ENCODE measurements at regions of chr2 and their contacts with region 1.

Region 1: DNA sequence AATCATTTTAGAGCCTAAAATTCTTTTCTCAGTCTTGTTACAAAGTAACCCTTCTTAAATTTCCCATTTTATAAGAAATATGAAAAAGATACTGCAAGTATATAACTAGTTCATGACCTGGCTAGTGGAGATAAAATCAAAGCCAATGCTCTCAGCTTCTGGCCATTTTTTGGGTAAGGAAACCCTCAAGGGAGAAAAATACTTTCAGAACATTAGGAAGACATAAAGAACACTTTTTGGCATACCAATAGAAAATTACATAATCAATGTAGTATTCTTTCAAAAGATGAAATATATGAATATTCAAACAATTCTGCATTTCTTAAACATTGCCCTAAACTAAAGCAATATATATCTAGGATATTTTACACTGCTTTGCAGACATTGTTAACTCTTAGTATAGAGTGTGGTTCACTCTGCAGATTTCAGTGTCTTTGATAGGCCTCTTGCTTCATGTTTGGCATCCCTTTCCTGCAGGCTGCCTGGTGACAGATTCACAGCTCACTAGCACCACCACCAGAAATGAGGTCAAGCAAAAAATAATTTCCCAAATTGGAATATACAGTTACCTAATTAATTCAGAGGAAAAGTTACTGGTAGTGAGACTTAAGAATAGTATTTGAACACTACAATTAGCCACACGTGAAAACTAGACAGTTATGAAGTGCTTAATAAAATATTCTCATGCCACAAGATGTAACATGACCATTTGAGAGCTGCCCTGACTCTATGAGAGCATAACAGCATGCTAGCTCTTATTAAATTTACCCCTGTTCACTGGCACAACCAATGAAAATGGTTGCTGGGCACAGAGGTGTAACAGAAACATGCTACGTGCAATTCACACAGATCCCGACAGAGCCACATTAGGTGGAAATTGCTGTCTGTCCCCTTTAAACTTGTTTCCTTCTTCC is 36.0 kb downstream of the PAIP2B start:
- DNase-seq: peak; percentile 32
- H3K4me3 ChIP-seq: no peak overlapping the region
- H3K27ac ChIP-seq: no peak overlapping the region
- H3K4me1 ChIP-seq: no peaks in the 10 kb centered on the region
- H3K27me3 ChIP-seq: no peaks in the 10 kb centered on the region
- CTCF ChIP-seq: peak; percentile 48

Region 2: GRCh38 chr2:71049365-71050360 is 141.2 kb before region 1 on chr2:
- CTCF ChIA-PET with region 1: no interaction called
- POLR2A ChIA-PET with region 1: no interaction called
- intact Hi-C with region 1: no loop called
- DNase-seq: no peak
- H3K4me3 ChIP-seq: no peak overlapping the region
- H3K27ac ChIP-seq: no peak overlapping the region
- H3K4me1 ChIP-seq: no peaks in the 10 kb centered on the region
- H3K27me3 ChIP-seq: no peaks in the 10 kb centered on the region
- CTCF ChIP-seq: no peak

Region 3: GRCh38 chr2:71082402-71083252 is 108.3 kb before region 1 on chr2:
- CTCF ChIA-PET with region 1: no interaction called
- POLR2A ChIA-PET with region 1: no interaction called
- intact Hi-C with region 1: no loop called
- DNase-seq: no peak
- H3K4me3 ChIP-seq: no peak overlapping the region
- H3K27ac ChIP-seq: no peak overlapping the region
- H3K4me1 ChIP-seq: no peaks in the 10 kb centered on the region
- H3K27me3 ChIP-seq: no peaks in the 10 kb centered on the region
- CTCF ChIP-seq: no peak

Region 4: DNA sequence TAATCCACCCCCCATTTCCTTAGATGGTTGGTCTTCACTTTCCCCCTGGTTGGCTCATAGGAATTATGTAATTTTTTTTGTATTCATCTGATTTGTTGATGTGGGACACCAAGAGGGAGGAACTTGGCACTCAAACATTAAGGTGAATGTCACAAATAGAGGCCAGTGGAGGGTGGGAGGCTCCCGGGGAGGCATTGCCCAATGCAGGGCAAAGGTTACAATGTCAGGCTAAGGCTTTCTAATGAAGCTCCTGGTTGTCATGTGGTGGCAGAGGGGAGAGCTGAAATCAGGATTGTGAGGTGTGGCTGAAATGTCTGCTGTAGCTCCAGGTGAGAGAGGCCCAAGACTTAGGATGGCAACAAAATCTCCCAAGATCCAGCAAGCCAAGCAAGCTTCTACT is 17.8 kb before region 1 on chr2:
- CTCF ChIA-PET with region 1: no interaction called
- POLR2A ChIA-PET with region 1: interaction called, 11 read pairs
- intact Hi-C with region 1: no loop called
- DNase-seq: no peak
- H3K4me3 ChIP-seq: no peak overlapping the region
- H3K27ac ChIP-seq: no peak overlapping the region
- H3K4me1 ChIP-seq: no peaks in the 10 kb centered on the region
- H3K27me3 ChIP-seq: no peaks in the 10 kb centered on the region
- CTCF ChIP-seq: no peak

Region 5: DNA sequence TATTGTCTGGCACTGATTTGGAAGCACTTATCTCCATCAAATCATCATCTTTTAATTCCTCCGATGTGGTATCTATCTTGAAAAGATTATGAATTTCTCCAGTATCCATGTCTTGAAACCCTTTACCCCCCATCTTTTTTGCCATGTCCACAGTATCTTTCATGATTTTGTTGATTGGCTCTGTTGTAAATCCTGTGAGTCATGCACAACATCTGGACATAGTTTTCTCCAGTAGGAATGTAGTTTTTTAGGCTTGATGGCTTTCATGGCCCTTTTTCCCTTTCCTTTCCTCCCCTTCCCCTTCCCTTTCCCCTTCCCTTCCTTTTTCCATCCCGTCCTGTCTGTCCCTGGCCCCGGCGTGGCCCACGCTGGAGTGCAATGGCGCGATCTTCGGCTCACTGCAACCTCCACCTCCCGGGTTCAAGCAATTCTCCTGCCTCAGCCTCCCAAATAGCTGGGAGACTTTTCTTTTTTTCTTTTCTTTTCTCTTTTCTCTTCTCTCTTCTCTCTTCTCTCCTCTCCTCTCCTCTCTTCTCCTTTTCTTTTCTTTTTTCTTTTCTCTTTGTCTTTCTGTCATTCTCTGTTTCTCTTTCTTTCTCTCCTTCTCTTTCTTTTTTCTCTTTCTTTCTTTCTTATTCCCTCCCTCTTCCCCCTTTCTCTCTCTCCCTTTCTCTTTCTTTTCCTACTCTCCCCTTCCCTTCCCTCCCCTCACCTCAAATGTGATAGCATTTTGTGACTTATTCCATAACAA is 122.3 kb after region 1 on chr2:
- CTCF ChIA-PET with region 1: no interaction called
- POLR2A ChIA-PET with region 1: no interaction called
- intact Hi-C with region 1: no loop called
- DNase-seq: no peak
- H3K4me3 ChIP-seq: no peak overlapping the region
- H3K27ac ChIP-seq: no peak overlapping the region
- H3K4me1 ChIP-seq: no peaks in the 10 kb centered on the region
- H3K27me3 ChIP-seq: no peaks in the 10 kb centered on the region
- CTCF ChIP-seq: no peak

Region 6: DNA sequence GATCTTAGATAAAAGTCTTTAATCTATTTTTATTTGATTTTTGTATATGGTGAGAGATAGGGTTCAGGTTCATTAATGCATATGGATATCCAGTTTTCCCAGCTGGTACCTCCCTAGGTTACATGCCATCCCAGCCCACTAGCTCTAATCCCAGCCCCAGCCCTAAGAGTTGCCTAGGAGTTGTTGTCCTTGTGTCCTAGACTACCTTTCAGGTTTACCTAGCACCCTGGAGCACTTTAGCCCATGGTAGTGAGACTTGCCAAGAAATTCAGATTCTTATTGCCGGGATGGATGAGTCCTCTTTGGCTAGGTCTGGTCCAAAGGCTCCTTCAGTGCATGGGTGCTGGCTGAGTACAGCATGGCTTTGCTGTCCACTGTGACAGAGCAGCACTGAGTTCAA is 181.1 kb after region 1 on chr2:
- CTCF ChIA-PET with region 1: no interaction called
- POLR2A ChIA-PET with region 1: no interaction called
- intact Hi-C with region 1: no loop called
- DNase-seq: no peak
- H3K4me3 ChIP-seq: no peak overlapping the region
- H3K27ac ChIP-seq: no peak overlapping the region
- H3K4me1 ChIP-seq: no peaks in the 10 kb centered on the region
- H3K27me3 ChIP-seq: no peaks in the 10 kb centered on the region
- CTCF ChIP-seq: no peak

Measured in A673 (cell line).